Activated CD4-positive, alpha-beta T cell treated with anti-CD3 and anti-CD28 coated beads, Interleukin-2, amount 10 ng/mL, durations not matched to agents 24 days and 14 days (primary cell): ENCODE measurements at regions of chr5 and their contacts with region 1.

Region 1: DNA sequence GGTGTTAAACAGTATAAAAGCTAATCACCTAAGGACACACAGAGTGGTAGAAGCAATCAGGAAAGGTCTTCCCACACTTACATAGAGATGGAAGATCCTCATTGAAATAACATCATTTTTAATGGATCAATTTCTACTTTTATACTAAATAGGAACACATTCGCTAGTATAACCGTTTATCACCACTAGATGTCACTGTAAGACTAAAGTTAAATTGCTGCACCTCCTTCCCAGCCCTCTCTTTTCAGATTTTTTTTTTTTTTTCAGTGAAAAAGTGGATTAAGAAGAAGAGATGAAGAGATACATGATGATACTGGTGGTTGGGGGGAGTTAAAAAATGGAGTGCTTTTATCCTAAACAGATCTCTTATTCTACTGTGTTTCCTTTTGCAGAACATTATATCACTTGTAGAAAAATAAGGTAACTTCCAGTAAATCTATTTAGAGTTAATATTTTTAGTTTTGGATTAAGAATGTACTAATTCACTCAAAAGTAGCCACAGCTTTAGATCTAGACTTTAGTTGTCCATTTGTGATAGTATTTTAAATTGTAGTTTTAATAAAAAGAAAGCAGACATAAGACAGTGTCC is 116.9 kb upstream of the ARRDC3 start:
- DNase-seq: no peak
- H3K4me3 Mint-ChIP-seq: no peak overlapping the region
- H3K27ac Mint-ChIP-seq: no peak overlapping the region
- H3K4me1 Mint-ChIP-seq: no peaks in the 10 kb centered on the region
- H3K27me3 Mint-ChIP-seq: peaks cover 12% of the 10 kb centered on the region

Region 2: GRCh38 chr5:91443023-91443422 is 57.0 kb before region 1 on chr5:
- intact Hi-C with region 1: no loop called
- DNase-seq: no peak
- H3K4me3 Mint-ChIP-seq: no peak overlapping the region
- H3K27ac Mint-ChIP-seq: no peak overlapping the region
- H3K4me1 Mint-ChIP-seq: no peaks in the 10 kb centered on the region
- H3K27me3 Mint-ChIP-seq: peaks cover 1% of the 10 kb centered on the region

Region 3: DNA sequence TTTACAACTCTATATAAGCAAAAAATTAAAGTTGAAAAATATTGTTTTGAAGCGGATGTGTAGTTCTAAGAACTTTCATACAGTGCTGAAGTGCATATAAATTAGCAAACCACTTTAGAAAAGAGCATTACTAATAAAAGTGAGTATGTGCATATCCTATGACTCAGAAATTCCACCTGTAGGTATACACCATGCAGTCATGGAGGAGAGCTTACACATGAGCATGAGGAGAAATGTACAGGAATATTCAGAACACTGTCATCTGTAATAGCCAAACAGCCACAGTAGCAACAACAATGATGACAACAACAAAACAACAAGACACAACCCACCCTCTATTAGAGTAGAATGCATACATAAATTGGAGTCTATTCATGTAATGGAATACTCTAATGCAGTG is 21.3 kb after region 1 on chr5:
- intact Hi-C with region 1: no loop called
- DNase-seq: no peak
- H3K4me3 Mint-ChIP-seq: no peak overlapping the region
- H3K27ac Mint-ChIP-seq: no peak overlapping the region
- H3K4me1 Mint-ChIP-seq: no peaks in the 10 kb centered on the region
- H3K27me3 Mint-ChIP-seq: peaks cover 4% of the 10 kb centered on the region

Region 4: GRCh38 chr5:91591076-91591475 is 91.0 kb after region 1 on chr5:
- intact Hi-C with region 1: no loop called
- DNase-seq: no peak
- H3K4me3 Mint-ChIP-seq: no peak overlapping the region
- H3K27ac Mint-ChIP-seq: no peak overlapping the region
- H3K4me1 Mint-ChIP-seq: no peaks in the 10 kb centered on the region
- H3K27me3 Mint-ChIP-seq: no peaks in the 10 kb centered on the region

Region 5: DNA sequence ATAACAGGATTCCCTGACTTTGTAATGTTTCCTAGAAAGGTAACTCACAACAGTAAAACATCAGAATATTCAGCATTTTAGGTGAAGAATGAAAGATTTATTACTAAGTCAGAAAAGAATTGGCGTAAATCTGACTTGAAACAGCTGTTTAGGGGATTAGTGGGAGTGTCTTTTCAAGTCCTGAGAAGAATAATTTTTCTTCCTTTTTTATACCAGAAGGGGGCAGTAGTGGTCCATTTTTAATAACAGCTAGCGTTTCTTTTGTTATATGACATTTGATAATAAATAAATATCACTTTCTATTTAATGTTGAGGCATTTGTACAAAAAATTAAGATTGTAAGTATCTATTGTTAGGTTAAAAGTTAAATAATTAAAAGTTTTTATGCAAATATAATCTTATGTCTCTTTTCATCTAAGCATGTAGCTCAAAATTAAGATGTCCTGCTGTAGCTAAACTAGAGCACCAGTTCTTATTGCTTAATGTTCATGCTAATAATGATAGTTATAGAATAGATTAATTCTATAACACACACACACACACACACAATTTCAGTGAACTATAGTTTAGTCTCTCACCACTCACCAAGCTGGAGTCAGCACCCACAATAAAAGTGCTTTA is 141.8 kb after region 1 on chr5:
- intact Hi-C with region 1: loop called (anchors 5 kb)
- DNase-seq: no peak
- H3K4me3 Mint-ChIP-seq: no peak overlapping the region
- H3K27ac Mint-ChIP-seq: no peak overlapping the region
- H3K4me1 Mint-ChIP-seq: no peaks in the 10 kb centered on the region
- H3K27me3 Mint-ChIP-seq: no peaks in the 10 kb centered on the region